ENCODE measurements at regions of chr11 and their contacts with region 1.

Region 1: GRCh38 chr11:78228467-78228866 is 39.7 kb downstream of the USP35 start:
- DNase-seq: peak in 1 of 5 donors; percentile 32
- ATAC-seq: peak in 3 of 4 donors; percentile 53 to 70 (median 55)
- H3K4me3 ChIP-seq: no peak overlapping the region
- H3K27ac ChIP-seq: no peak overlapping the region
- H3K4me1 ChIP-seq: peaks cover 0 to 41% (median 24%) of the 10 kb centered on the region in 12 donors
- H3K27me3 ChIP-seq: no peaks in the 10 kb centered on the region
- CTCF ChIP-seq: peak in 11 of 12 donors; percentile 33 to 73 (median 65)
- POLR2A ChIP-seq: no peak

Region 2: GRCh38 chr11:77705195-77705876 is 523.1 kb before region 1 on chr11:
- intact Hi-C with region 1: no loop called
- DNase-seq: no peak
- ATAC-seq: no peak
- H3K4me3 ChIP-seq: no peak overlapping the region
- H3K27ac ChIP-seq: no peak overlapping the region
- H3K4me1 ChIP-seq: peaks cover 0 to 6% (median 0%) of the 10 kb centered on the region in 12 donors
- H3K27me3 ChIP-seq: no peaks in the 10 kb centered on the region
- CTCF ChIP-seq: no peak
- POLR2A ChIP-seq: no peak

Region 3: GRCh38 chr11:78290293-78291176 is 62.1 kb after region 1 on chr11:
- intact Hi-C with region 1: loop called in 1 of 10 experiments (anchors 10 kb)
- DNase-seq: no peak
- ATAC-seq: peak; percentile 37 to 88 (median 74)
- H3K4me3 ChIP-seq: no peak overlapping the region
- H3K27ac ChIP-seq: peak overlapping the region in 1 of 12 donors; percentile 86
- H3K4me1 ChIP-seq: peaks cover 0 to 46% (median 3%) of the 10 kb centered on the region in 12 donors
- H3K27me3 ChIP-seq: no peaks in the 10 kb centered on the region
- CTCF ChIP-seq: no peak
- POLR2A ChIP-seq: no peak

Region 4: GRCh38 chr11:78432058-78432515 is 203.6 kb after region 1 on chr11:
- intact Hi-C with region 1: loop called in 1 of 10 experiments (anchors 5 kb)
- DNase-seq: no peak
- ATAC-seq: peak in 2 of 4 donors; percentile 34 to 42
- H3K4me3 ChIP-seq: no peak overlapping the region
- H3K27ac ChIP-seq: no peak overlapping the region
- H3K4me1 ChIP-seq: peaks cover 0 to 16% (median 0%) of the 10 kb centered on the region in 12 donors
- H3K27me3 ChIP-seq: no peaks in the 10 kb centered on the region
- CTCF ChIP-seq: peak; percentile 32 to 62 (median 49)
- POLR2A ChIP-seq: no peak

Region 5: DNA sequence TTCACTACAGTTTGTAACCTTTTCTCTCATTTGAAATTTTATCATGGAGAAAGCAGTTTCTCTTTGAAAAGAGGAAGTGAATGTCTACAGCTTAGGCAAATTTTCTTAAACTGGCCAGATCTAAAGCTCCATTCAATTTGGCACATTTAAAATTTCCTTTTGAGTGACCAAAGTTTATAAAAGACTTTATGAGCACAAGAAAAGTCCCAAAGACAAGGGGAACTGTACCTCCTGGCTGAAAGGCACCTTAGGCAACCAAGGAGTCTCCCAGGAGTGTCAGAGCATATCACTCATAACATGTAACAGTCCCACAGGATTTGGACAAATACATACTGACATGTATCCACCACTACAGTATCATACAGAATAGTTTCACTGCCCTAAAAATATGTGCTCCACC is 304.9 kb after region 1 on chr11:
- intact Hi-C with region 1: no loop called
- DNase-seq: no peak
- ATAC-seq: no peak
- H3K4me3 ChIP-seq: no peak overlapping the region
- H3K27ac ChIP-seq: peak overlapping the region in 1 of 12 donors; percentile 63
- H3K4me1 ChIP-seq: no peaks in the 10 kb centered on the region
- H3K27me3 ChIP-seq: no peaks in the 10 kb centered on the region
- CTCF ChIP-seq: no peak
- POLR2A ChIP-seq: no peak

Region 6: DNA sequence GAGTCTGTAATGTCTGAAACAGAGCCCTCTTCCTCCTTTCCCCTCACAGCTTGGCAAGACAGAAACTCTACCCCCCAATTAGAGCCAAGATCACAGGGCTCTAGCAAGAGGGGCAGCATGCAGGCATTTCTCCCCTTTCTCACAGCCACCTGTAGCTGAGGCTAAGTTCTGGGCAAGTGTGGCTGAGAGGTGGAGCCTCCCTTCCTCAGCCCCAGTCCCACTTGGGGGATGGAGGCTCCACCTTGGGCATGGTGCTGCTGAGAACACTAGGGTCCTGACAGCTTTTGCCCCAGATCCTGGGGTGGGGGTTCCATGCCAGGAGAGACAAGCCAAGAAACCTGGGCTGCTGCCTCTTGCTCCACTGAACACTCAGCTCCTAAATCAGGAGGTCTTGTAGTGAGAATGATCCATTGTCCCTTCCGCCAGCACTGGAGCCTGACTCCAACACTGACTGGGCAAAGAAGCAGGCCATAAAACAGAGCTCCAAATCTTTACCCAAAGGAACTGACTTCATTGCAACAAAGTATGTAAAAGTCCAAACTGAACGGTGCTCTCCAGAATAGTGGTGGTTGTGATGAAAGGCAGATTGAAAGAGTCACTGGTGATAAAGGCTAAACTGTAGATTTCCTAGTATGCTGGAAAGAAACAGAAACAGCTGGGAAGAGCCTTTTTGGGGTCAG is 320.6 kb after region 1 on chr11:
- intact Hi-C with region 1: loop called in 1 of 10 experiments (anchors 5 kb)
- DNase-seq: no peak
- ATAC-seq: peak in 2 of 4 donors; percentile 16 to 27
- H3K4me3 ChIP-seq: no peak overlapping the region
- H3K27ac ChIP-seq: peak overlapping the region in 1 of 12 donors; percentile 19
- H3K4me1 ChIP-seq: peaks cover 0 to 13% (median under 1%) of the 10 kb centered on the region in 12 donors
- H3K27me3 ChIP-seq: no peaks in the 10 kb centered on the region
- CTCF ChIP-seq: no peak
- POLR2A ChIP-seq: no peak